HAP-1 (cell line): ENCODE measurements at regions of chr22 and their contacts with region 1.

Region 1: DNA sequence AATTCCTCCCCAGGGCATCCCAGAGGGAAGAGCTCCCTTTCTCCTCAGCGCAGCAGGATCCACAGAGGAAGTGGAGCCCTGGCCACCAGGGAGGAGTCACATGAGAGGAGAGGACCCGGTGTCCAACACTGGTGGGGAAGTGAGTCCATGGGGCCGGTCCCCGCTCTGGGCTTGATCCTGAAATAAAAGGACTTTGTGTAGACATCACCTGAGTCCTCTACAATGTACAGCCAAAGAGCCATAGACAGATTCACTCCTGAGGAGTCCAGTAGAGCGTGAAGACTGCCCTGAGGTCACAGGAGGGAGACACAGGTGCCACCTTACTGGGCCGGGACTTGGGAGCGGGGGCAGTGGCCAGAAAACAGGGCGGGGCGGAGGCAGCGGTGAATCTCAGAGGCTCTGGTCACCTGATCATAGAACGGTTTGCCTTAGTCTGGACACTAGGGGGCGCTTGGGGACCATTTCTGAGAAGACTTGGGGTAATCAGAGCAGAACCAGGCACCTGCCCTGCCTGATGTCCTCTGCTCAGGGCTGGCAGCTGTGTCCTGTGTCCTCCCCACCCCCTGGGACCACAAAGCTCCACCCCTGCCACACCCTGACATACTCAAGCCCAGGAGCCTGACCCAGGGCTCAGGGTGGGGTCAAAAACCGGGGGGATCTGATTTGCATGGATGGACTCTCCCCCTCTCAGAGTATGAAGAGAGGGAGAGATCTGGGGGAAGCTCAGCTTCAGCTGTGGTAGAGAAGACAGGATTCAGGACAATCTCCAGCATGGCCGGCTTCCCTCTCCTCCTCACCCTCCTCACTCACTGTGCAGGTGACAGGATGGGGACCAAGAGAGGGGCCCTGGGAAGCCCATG is 112.7 kb downstream of the VPREB1 start:
- DNase-seq: peak; percentile 68 to 94
- H3K4me3 ChIP-seq: no peak overlapping the region
- H3K4me1 ChIP-seq: no peaks in the 10 kb centered on the region
- H3K27me3 ChIP-seq: peaks cover 21% of the 10 kb centered on the region

Region 2: GRCh38 chr22:22210375-22210774 is 146.9 kb before region 1 on chr22:
- in situ Hi-C with region 1: loop called (anchors 10 kb)
- DNase-seq: no peak
- H3K4me3 ChIP-seq: no peak overlapping the region
- H3K4me1 ChIP-seq: no peaks in the 10 kb centered on the region
- H3K27me3 ChIP-seq: peaks cover 19% of the 10 kb centered on the region

Region 3: GRCh38 chr22:22748297-22748743 is 391.1 kb after region 1 on chr22:
- in situ Hi-C with region 1: loop called (anchors 25 kb)
- DNase-seq: peak; percentile 15 to 61
- H3K4me3 ChIP-seq: no peak overlapping the region
- H3K4me1 ChIP-seq: no peaks in the 10 kb centered on the region
- H3K27me3 ChIP-seq: peaks cover 4% of the 10 kb centered on the region; the same call in 1 of the 2 replicates

Region 4: GRCh38 chr22:23054531-23055257 is 697.4 kb after region 1 on chr22:
- in situ Hi-C with region 1: no loop called
- DNase-seq: no peak
- H3K4me3 ChIP-seq: no peak overlapping the region
- H3K4me1 ChIP-seq: no peaks in the 10 kb centered on the region
- H3K27me3 ChIP-seq: no peaks in the 10 kb centered on the region